Panc1 (cell line): ENCODE measurements at regions of chr1 and their contacts with region 1.

Region 1: GRCh38 chr1:11373895-11374747 is 101.1 kb downstream of the UBIAD1 start:
- DNase-seq: no peak
- ATAC-seq: peak; percentile 28; the same call in 1 of the 2 replicates
- H3K4me3 ChIP-seq: no peak overlapping the region
- H3K27ac ChIP-seq: no peak overlapping the region
- H3K4me1 ChIP-seq: no peaks in the 10 kb centered on the region
- H3K27me3 ChIP-seq: no peaks in the 10 kb centered on the region
- CTCF ChIP-seq: no peak

Region 2: DNA sequence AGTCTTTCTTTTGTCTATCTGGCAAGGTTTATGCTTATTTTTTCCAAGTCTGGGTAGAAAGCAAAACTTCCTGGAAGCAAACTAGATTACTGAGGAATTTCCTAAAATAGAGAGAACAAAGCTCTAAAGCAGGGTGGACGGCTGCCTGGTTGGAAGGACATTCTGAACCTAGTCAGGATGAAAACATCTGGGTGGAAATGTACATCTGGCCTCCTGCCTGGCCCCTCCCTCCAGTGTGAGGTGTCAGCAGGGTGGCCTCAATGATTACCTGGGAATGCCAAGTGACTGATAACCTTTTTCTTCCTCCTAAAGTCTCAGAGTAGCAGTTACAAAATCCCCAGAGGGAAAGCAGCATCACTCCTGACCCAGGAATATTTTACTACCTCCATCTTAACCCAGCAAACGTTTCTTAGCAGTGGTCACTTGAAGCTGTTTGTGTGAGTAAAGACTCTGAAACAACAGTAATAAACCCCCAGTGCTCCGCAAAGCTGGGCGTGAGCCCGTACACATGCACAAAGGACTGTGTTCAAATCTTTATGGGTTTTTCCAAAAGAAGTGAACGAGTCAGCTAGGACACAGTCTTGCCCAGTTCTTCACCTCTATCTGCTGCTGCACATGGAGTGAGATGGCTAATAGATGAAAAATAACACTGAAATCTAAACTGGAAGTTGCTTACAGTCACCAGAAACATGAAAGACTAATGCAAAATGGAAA is 166.1 kb before region 1 on chr1:
- CTCF ChIA-PET with region 1: no interaction called
- POLR2A ChIA-PET with region 1: interaction called, 10 read pairs
- in situ Hi-C with region 1: no loop called
- intact Hi-C with region 1: no loop called
- DNase-seq: no peak
- ATAC-seq: no peak
- H3K4me3 ChIP-seq: no peak overlapping the region
- H3K27ac ChIP-seq: peak overlapping the region; percentile 36; the same call in 1 of the 2 replicates
- H3K4me1 ChIP-seq: no peaks in the 10 kb centered on the region
- H3K27me3 ChIP-seq: no peaks in the 10 kb centered on the region
- CTCF ChIP-seq: no peak

Region 3: GRCh38 chr1:11550664-11551283 is 176.7 kb after region 1 on chr1:
- CTCF ChIA-PET with region 1: interaction called, 11 read pairs
- POLR2A ChIA-PET with region 1: no interaction called
- in situ Hi-C with region 1: no loop called
- intact Hi-C with region 1: no loop called
- DNase-seq: no peak
- ATAC-seq: no peak
- H3K4me3 ChIP-seq: no peak overlapping the region
- H3K27ac ChIP-seq: no peak overlapping the region
- H3K4me1 ChIP-seq: no peaks in the 10 kb centered on the region
- H3K27me3 ChIP-seq: peaks cover 26% of the 10 kb centered on the region
- CTCF ChIP-seq: no peak

Region 4: GRCh38 chr1:12161662-12162458 is 787.7 kb after region 1 on chr1:
- CTCF ChIA-PET with region 1: no interaction called
- POLR2A ChIA-PET with region 1: no interaction called
- in situ Hi-C with region 1: no loop called
- intact Hi-C with region 1: no loop called
- DNase-seq: peak; percentile 38
- ATAC-seq: peak; percentile 87
- H3K4me3 ChIP-seq: no peak overlapping the region
- H3K27ac ChIP-seq: peak overlapping the region; percentile 40; the same call in 1 of the 2 replicates
- H3K4me1 ChIP-seq: peaks cover 21% of the 10 kb centered on the region
- H3K27me3 ChIP-seq: no peaks in the 10 kb centered on the region
- CTCF ChIP-seq: no peak